ENCODE measurements at regions of chr4 and their contacts with region 1.

Region 1: GRCh38 chr4:101020956-101021355 is 326.4 kb downstream of the PPP3CA start:
- DNase-seq: peak; percentile 10
- H3K4me3 Mint-ChIP-seq: peak overlapping the region; percentile 57
- H3K27ac Mint-ChIP-seq: peak overlapping the region; percentile 74
- H3K4me1 Mint-ChIP-seq: peaks cover 54% of the 10 kb centered on the region
- H3K27me3 Mint-ChIP-seq: no peaks in the 10 kb centered on the region

Region 2: GRCh38 chr4:100168521-100168920 is 852.4 kb before region 1 on chr4:
- intact Hi-C with region 1: loop called (anchors 10 kb)
- DNase-seq: no peak
- H3K4me3 Mint-ChIP-seq: no peak overlapping the region
- H3K27ac Mint-ChIP-seq: no peak overlapping the region
- H3K4me1 Mint-ChIP-seq: peaks cover 44% of the 10 kb centered on the region
- H3K27me3 Mint-ChIP-seq: no peaks in the 10 kb centered on the region

Region 3: GRCh38 chr4:100895556-100896197 is 125.3 kb before region 1 on chr4:
- intact Hi-C with region 1: loop called (anchors 10 kb)
- DNase-seq: no peak
- H3K4me3 Mint-ChIP-seq: peak overlapping the region; percentile 56
- H3K27ac Mint-ChIP-seq: no peak overlapping the region
- H3K4me1 Mint-ChIP-seq: peaks cover 14% of the 10 kb centered on the region
- H3K27me3 Mint-ChIP-seq: peaks cover 3% of the 10 kb centered on the region

Region 4: DNA sequence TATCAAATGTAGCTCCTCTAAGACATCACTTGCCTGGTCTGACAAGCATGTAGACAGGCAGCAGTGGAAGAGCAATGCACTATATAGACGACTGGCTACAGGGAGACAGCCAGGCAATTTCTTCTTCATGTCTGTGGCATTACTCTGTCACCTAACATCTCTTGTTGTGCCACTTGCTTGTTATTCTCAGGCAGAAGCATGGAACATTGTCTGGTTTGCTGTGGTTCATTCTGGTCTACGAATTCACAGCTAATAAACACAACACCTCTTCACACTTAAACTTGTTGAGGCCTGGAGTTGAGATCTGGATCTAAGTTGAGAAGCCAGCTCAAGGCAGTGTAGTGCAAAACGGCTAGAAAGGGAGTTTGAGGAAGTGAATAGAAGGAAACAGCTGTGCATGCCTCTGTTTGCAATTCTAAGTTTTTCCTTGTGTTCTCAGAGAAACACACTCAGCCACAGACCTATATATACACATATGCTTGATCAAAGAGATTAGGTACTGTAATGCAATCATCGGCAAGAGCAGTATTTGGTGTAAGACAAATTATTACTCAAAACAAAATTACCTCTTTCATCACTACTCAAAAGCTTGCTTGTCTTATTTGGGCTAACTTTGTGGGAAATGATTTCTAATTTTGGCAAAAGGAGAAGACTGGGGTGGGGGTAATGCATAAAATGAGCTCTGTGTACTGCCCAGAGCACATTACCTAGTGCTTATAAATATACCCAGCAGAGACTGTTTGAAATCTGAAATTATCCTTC is 82.6 kb after region 1 on chr4:
- intact Hi-C with region 1: loop called (anchors 1 kb)
- DNase-seq: no peak
- H3K4me3 Mint-ChIP-seq: peak overlapping the region; percentile 11
- H3K27ac Mint-ChIP-seq: peak overlapping the region; percentile 52
- H3K4me1 Mint-ChIP-seq: peaks cover 25% of the 10 kb centered on the region
- H3K27me3 Mint-ChIP-seq: no peaks in the 10 kb centered on the region

Region 5: GRCh38 chr4:101205916-101206315 is 185.0 kb after region 1 on chr4:
- intact Hi-C with region 1: loop called (anchors 2 kb)
- DNase-seq: peak; percentile 46
- H3K4me3 Mint-ChIP-seq: no peak overlapping the region
- H3K27ac Mint-ChIP-seq: peak overlapping the region; percentile 42
- H3K4me1 Mint-ChIP-seq: peaks cover 30% of the 10 kb centered on the region
- H3K27me3 Mint-ChIP-seq: peaks cover 2% of the 10 kb centered on the region

Region 6: DNA sequence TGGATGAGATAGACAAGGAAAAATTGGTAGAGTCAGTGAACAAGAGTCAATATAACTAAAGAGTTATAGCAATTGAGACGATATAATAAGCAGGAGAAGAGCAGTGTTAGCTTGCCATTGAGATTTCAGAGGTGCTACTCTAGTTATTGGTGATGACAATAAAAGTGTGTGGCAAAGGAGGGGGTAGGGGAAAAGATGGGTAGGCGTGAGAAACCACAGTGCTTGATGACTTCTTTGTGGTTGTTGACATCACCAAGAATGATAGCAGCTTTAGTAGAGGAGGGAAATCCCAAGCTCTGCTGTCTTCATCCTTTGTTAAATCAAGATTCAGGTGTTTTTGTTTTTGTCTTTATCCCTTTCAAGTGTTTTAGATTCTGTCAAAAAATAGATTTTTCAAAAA is 506.2 kb after region 1 on chr4:
- intact Hi-C with region 1: loop called (anchors 5 kb)
- DNase-seq: peak; percentile 32
- H3K4me3 Mint-ChIP-seq: no peak overlapping the region
- H3K27ac Mint-ChIP-seq: no peak overlapping the region
- H3K4me1 Mint-ChIP-seq: peaks cover 21% of the 10 kb centered on the region
- H3K27me3 Mint-ChIP-seq: peaks cover 36% of the 10 kb centered on the region

Measured in activated T-helper 2 cell treated with anti-CD3 and anti-CD28 coated beads, Interferon-gamma antibody, Interleukin-2, Interleukin-4, amounts not matched to agents 10 μg/mL and 5 μg/mL and 100 μg/mL, durations not matched to agents 14 hours and 24 hours and 36 hours (primary cell).